ENCODE measurements at regions of chr18 and their contacts with region 1.

Region 1: DNA sequence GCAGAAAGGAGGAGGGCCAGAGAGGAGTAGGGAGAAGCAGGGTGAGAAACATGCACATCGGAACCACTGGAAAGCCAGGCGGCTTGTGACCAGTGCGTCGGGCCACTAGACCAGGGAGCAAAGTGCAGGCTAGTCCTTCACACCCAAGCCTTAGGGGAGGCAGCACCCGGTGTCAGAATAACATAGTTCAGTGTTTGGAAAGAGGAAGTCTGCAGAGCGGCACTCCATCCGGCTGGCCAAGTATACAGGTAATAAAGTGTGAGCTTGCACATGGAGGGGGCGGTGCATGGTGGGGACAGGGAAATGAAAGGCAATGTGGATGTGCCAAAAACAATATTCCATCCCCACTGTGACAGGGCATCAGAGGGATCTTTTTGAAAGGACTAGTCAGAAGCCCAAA is 69.7 kb downstream of the ZNF521 start:
- DNase-seq: peak in 1 of 2 donors; percentile 20
- ATAC-seq: peak in 5 of 8 donors; percentile 21 to 36 (median 25)
- H3K4me3 ChIP-seq: no peak overlapping the region
- H3K27ac ChIP-seq: peak overlapping the region in 7 of 10 donors; percentile 26 to 91 (median 78)
- H3K4me1 ChIP-seq: peaks cover 8 to 87% (median 65%) of the 10 kb centered on the region in 9 donors
- H3K27me3 ChIP-seq: no peaks in the 10 kb centered on the region
- CTCF ChIP-seq: no peak

Region 2: GRCh38 chr18:25230658-25231326 is 51.5 kb before region 1 on chr18:
- intact Hi-C with region 1: loop called in 5 of 10 experiments (anchors 5 to 10 kb)
- DNase-seq: peak; percentile 61 to 81
- ATAC-seq: peak; percentile 84 to 91 (median 87)
- H3K4me3 ChIP-seq: peak overlapping the region in 1 of 10 donors; percentile 17
- H3K27ac ChIP-seq: peak overlapping the region; percentile 24 to 81 (median 72)
- H3K4me1 ChIP-seq: peaks cover 2 to 77% (median 64%) of the 10 kb centered on the region in 9 donors
- H3K27me3 ChIP-seq: no peaks in the 10 kb centered on the region
- CTCF ChIP-seq: no peak

Region 3: DNA sequence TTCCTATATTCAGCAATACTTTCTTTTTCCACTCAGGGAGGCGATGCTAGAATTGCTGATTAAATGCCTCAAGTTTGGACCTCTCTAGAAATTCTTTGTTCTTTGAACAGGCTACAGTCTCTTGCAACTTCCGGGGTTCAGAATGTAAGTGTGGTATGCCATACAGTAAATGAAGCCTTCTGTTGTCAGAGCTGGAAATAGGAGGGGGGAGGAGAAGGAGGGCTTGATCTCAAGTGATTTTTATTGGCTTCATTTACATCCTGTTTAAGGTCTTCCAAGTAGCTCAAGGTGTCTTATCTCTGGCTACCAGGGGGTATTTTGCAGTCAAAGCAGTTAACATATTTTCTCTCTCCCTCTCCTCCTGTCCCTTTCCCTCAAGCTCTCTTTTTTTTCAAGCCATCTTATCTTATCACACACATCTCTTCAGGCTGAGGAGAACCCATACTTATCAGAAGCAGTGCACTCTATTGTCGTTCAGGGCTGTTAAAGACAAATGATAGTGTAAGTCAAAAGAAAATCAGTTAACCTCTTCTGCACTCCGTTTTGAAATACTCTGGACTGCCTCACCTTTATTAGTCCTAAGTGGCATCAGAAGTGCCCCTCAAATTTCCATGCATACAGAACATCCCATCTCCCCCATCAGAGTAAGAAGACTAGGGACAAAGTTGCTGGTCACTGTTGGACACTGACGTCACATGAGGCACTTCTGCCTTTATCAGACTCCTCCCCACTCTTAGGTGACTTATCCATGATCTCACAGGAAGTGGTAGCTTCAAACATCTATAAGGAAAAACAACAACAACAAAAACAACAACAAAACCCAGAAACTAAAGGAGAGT is 42.5 kb before region 1 on chr18:
- intact Hi-C with region 1: loop called in 5 of 10 experiments (anchors 5 to 10 kb)
- DNase-seq: no peak
- ATAC-seq: peak in 4 of 8 donors; percentile 18 to 51 (median 27)
- H3K4me3 ChIP-seq: no peak overlapping the region
- H3K27ac ChIP-seq: peak overlapping the region in 3 of 10 donors; percentile 0 to 45 (median 22)
- H3K4me1 ChIP-seq: peaks cover 0 to 61% (median 31%) of the 10 kb centered on the region in 9 donors
- H3K27me3 ChIP-seq: no peaks in the 10 kb centered on the region
- CTCF ChIP-seq: no peak

Region 4: DNA sequence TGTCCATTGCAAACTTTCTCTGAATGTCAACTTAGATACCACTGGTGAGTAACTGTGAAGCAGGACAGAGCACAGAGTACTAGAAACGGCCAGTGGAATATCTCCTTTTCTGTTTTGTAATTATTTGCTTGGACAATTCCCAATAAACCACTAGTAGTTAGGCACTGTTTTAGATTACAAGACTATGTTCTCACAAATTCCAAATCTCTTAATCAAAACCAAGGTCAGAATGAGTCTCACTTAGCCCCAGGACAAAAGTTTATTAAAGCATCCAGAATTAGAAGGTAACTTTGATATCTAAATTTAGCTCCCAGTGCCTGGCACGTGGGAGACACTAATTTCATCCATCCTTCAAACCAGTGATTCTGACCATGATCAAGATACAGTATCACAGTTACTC is 19.4 kb before region 1 on chr18:
- intact Hi-C with region 1: loop called in 1 of 10 experiments (anchors 2 kb)
- DNase-seq: no peak
- ATAC-seq: peak in 5 of 8 donors; percentile 47 to 71 (median 67)
- H3K4me3 ChIP-seq: no peak overlapping the region
- H3K27ac ChIP-seq: peak overlapping the region in 3 of 10 donors; percentile 9 to 19 (median 9)
- H3K4me1 ChIP-seq: peaks cover 0 to 17% (median 9%) of the 10 kb centered on the region in 9 donors
- H3K27me3 ChIP-seq: no peaks in the 10 kb centered on the region
- CTCF ChIP-seq: no peak

Measured in heart right ventricle (tissue), 16 donors.